ENCODE measurements at regions of chr11 and their contacts with region 1.

Region 1: GRCh38 chr11:121318848-121319834 is 26.6 kb downstream of the SC5D start:
- DNase-seq: no peak
- ATAC-seq: peak; percentile 56

Region 2: GRCh38 chr11:121210445-121211080 is 108.6 kb before region 1 on chr11:
- intact Hi-C with region 1: no loop called
- DNase-seq: no peak
- ATAC-seq: no peak

Region 3: GRCh38 chr11:121534131-121535093 is 215.3 kb after region 1 on chr11:
- intact Hi-C with region 1: loop called (anchors 5 kb)
- DNase-seq: no peak
- ATAC-seq: peak; percentile 53

Region 4: GRCh38 chr11:121591405-121592033 is 272.4 kb after region 1 on chr11:
- intact Hi-C with region 1: loop called (anchors 2 kb)
- DNase-seq: no peak
- ATAC-seq: peak; percentile 83

Measured in left ventricle myocardium superior (tissue), 1 donor.